ENCODE measurements at regions of chr2 and their contacts with region 1.

Region 1: GRCh38 chr2:102442967-102443828 is 20.2 kb downstream of the IL18RAP start:
- DNase-seq: no peak
- ATAC-seq: peak; percentile 49
- H3K4me3 Mint-ChIP-seq: no peak overlapping the region
- H3K27ac Mint-ChIP-seq: no peak overlapping the region
- H3K4me1 Mint-ChIP-seq: peaks cover 2% of the 10 kb centered on the region
- H3K27me3 Mint-ChIP-seq: no peaks in the 10 kb centered on the region
- CTCF ChIP-seq: no peak

Region 2: DNA sequence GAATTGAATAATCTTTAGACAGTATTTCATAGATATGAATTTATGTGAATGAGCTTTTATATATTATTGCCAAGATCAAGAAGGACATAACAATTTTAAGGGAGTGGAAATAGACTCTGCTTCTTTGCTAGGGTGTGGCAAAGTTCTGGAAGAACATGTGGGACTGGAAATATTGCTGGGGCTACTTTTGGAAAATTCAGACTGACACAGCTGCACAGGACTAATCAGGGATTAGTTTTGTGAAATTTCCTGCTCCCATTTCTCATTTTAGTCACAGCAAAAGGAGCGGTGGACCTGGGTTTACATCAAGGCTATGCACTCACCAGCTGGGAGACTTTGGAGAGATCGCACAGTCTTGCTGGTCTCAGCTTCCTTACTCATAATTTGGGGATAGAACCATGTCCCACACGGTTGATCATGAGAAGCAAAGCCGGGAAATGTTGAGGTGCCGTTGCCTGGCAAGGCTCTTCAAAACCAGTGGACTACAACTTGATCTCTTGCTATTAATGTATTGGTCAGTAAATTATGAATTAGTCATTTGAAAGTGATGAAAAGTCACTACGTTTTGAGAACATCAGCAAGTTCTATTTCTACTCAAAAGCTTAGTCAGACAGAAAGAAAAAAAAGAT is 213.9 kb before region 1 on chr2:
- CTCF ChIA-PET with region 1: no interaction called
- POLR2A ChIA-PET with region 1: no interaction called
- intact Hi-C with region 1: no loop called
- DNase-seq: no peak
- ATAC-seq: no peak
- H3K4me3 Mint-ChIP-seq: no peak overlapping the region
- H3K27ac Mint-ChIP-seq: no peak overlapping the region
- H3K4me1 Mint-ChIP-seq: peaks cover 10% of the 10 kb centered on the region
- H3K27me3 Mint-ChIP-seq: peaks cover 5% of the 10 kb centered on the region
- CTCF ChIP-seq: no peak

Region 3: GRCh38 chr2:102301867-102302362 is 141.3 kb before region 1 on chr2:
- CTCF ChIA-PET with region 1: interaction called, 7 read pairs
- POLR2A ChIA-PET with region 1: no interaction called
- intact Hi-C with region 1: loop called (anchors 1 kb)
- DNase-seq: no peak
- ATAC-seq: no peak
- H3K4me3 Mint-ChIP-seq: no peak overlapping the region
- H3K27ac Mint-ChIP-seq: no peak overlapping the region
- H3K4me1 Mint-ChIP-seq: peaks cover 3% of the 10 kb centered on the region
- H3K27me3 Mint-ChIP-seq: peaks cover 29% of the 10 kb centered on the region
- CTCF ChIP-seq: no peak

Region 4: GRCh38 chr2:102355526-102356380 is 87.4 kb before region 1 on chr2 and contains the start of gene IL18R1:
- CTCF ChIA-PET with region 1: interaction called, 8 read pairs
- POLR2A ChIA-PET with region 1: no interaction called
- intact Hi-C with region 1: loop called (anchors 1 kb)
- DNase-seq: peak; percentile 67
- ATAC-seq: peak; percentile 91
- H3K4me3 Mint-ChIP-seq: peak within 1 kb of the TSS; percentile 90
- H3K27ac Mint-ChIP-seq: peak within 1 kb of the TSS; percentile 86
- H3K4me1 Mint-ChIP-seq: peaks cover 25% of the 10 kb centered on the region
- H3K27me3 Mint-ChIP-seq: no peaks in the 10 kb centered on the region
- CTCF ChIP-seq: no peak
- total RNA-seq, gene IL18R1: 1.7 and 2.2 TPM in 2 replicates

Region 5: DNA sequence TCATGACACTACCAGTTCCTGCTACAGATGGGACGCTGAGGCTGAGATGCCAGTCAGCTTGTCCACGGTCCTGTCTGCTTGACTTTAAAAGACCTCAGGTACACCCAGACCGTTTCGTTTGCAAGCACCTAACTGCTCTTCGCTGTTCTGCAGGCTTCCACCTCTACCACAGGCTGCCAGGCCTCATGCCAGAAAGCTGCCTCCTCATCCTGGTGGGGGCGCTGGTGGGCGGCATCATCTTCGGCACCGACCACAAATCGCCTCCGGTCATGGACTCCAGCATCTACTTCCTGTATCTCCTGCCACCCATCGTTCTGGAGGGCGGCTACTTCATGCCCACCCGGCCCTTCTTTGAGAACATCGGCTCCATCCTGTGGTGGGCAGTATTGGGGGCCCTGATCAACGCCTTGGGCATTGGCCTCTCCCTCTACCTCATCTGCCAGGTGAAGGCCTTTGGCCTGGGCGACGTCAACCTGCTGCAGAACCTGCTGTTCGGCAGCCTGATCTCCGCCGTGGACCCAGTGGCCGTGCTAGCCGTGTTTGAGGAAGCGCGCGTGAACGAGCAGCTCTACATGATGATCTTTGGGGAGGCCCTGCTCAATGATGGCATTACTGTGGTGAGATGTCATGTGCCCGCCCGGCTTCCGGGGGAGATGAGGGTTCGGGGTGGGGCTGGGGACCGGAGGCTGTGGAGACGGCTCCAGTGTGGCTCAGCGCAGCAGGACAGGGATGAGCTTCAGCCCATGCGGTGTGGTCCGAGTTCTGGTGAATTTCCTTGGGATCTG is 35.7 kb after region 1 on chr2:
- CTCF ChIA-PET with region 1: no interaction called
- POLR2A ChIA-PET with region 1: no interaction called
- intact Hi-C with region 1: no loop called
- DNase-seq: no peak
- ATAC-seq: no peak
- H3K4me3 Mint-ChIP-seq: no peak overlapping the region
- H3K27ac Mint-ChIP-seq: no peak overlapping the region
- H3K4me1 Mint-ChIP-seq: no peaks in the 10 kb centered on the region
- H3K27me3 Mint-ChIP-seq: peaks cover 12% of the 10 kb centered on the region
- CTCF ChIP-seq: no peak